ENCODE measurements at regions of chr7 and their contacts with region 1.

Region 1: GRCh38 chr7:139133335-139134139 is 24.0 kb upstream of the ZC3HAV1 start:
- DNase-seq: peak; percentile 87 to 91
- ATAC-seq: peak; percentile 86 to 100 (median 98)
- H3K4me3 ChIP-seq: peak overlapping the region; percentile 75
- H3K27ac ChIP-seq: peak overlapping the region; percentile 47
- H3K4me1 ChIP-seq: no peaks in the 10 kb centered on the region
- H3K27me3 ChIP-seq: no peaks in the 10 kb centered on the region
- CTCF ChIP-seq: no peak

Region 2: DNA sequence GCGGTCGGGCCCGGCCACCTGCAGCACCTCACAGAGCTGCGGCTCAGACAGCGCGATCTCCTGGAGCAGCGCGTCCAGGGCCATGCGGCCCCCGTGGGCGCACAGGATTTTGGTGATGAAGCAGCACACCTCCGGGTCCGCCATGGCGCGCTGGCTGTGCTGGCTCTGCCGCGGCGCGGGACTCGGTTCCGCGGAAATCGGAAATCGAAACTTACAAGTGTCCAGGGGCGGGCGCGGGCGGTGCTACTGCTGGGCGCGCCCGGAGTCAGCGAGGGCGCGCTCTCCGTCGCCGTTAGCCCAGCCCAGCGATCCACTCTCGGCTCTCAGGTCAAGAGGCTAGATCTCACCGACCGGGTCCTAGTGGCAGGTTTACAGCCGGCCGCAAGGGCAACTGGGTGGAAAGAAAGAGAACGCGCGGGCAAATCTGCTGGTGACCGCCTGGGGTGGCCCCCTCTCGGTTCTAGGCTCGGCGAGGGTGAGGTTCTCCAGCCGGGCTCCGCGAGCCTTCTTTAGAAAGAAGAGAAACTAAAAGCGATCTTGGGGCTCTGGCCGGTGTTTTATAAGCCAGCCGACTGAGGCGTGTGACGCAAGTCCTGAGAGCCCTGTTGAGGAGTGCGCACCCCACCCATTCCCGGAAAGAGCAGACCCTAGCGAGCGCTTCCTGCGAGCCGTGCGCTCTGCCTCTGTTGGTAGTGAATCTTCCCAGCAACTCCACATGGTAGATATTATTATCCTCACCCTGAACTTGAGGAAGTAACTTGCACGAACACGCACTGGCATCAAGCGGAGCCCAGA is 24.2 kb before region 1 on chr7 and contains the start of gene ZC3HAV1:
- intact Hi-C with region 1: loop called in 1 of 2 experiments (anchors 1 kb)
- DNase-seq: peak; percentile 85 to 89
- ATAC-seq: peak; percentile 84 to 92 (median 87)
- H3K4me3 ChIP-seq: peak within 1 kb of the TSS; percentile 88
- H3K27ac ChIP-seq: peak within 1 kb of the TSS; percentile 88
- H3K4me1 ChIP-seq: peaks cover 2% of the 10 kb centered on the region
- H3K27me3 ChIP-seq: no peaks in the 10 kb centered on the region
- CTCF ChIP-seq: no peak
- total RNA-seq, gene ZC3HAV1: 3.0 to 5.3 (median 4.4) TPM

Region 3: GRCh38 chr7:139230774-139231512 is 97.4 kb after region 1 on chr7 and contains the start of gene UBN2:
- intact Hi-C with region 1: loop called in 1 of 2 experiments (anchors 5 kb)
- DNase-seq: peak; percentile 96 to 98
- ATAC-seq: peak; percentile 97 to 99 (median 98)
- H3K4me3 ChIP-seq: peak within 1 kb of the TSS; percentile 99
- H3K27ac ChIP-seq: peak within 1 kb of the TSS; percentile 98
- H3K4me1 ChIP-seq: peaks cover 22% of the 10 kb centered on the region
- H3K27me3 ChIP-seq: no peaks in the 10 kb centered on the region
- CTCF ChIP-seq: no peak
- total RNA-seq, gene UBN2: 20.6 to 30.1 (median 24.9) TPM